ENCODE measurements at regions of chr1 and their contacts with region 1.

Region 1: DNA sequence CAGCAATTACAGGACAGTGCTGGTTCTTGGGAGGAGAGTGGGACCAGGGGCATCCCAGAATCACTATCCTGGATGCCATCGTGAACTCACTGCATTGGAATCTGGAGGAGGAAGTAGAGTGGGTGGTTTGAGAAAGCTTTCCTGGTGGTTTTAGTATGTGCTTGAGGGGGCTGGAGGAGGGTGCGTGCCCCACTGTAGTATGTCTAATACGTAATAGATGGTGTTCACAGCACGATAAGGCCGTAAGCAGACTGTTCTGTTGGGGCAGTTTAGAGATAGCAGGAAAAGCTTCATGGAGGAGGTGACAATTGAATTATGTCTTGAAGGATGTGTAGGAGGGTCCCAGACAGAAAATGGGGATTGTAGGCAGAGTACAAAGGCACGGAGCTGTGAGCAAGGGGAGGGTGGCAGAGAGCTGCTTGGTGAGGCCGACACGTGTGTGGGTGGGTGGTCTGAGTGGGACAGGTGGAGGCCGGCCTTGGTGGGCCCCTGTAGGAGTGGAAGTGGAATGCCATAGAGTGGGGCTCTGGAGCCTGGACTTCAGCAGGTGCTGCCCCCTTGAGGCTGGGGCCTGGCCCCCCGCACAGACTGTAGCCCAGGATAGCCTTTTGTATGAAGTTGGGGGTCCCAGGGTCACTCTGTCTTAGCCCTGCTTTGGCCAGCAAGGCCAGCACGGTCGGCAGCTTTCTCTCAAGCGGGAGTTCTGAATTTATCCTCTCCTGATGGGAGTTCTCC is 37.0 kb downstream of the IL6R start:
- DNase-seq: no peak
- ATAC-seq: no peak
- H3K4me3 ChIP-seq: no peak overlapping the region
- H3K27ac ChIP-seq: no peak overlapping the region
- H3K4me1 ChIP-seq: peaks cover 43% of the 10 kb centered on the region
- H3K27me3 ChIP-seq: no peaks in the 10 kb centered on the region
- CTCF ChIP-seq: peak; percentile 31 to 57 (median 45)
- EP300 ChIP-seq: no peak
- POLR2A ChIP-seq: no peak
- RAD21 ChIP-seq: peak; percentile 29; the same call in 1 of the 2 replicates

Region 2: DNA sequence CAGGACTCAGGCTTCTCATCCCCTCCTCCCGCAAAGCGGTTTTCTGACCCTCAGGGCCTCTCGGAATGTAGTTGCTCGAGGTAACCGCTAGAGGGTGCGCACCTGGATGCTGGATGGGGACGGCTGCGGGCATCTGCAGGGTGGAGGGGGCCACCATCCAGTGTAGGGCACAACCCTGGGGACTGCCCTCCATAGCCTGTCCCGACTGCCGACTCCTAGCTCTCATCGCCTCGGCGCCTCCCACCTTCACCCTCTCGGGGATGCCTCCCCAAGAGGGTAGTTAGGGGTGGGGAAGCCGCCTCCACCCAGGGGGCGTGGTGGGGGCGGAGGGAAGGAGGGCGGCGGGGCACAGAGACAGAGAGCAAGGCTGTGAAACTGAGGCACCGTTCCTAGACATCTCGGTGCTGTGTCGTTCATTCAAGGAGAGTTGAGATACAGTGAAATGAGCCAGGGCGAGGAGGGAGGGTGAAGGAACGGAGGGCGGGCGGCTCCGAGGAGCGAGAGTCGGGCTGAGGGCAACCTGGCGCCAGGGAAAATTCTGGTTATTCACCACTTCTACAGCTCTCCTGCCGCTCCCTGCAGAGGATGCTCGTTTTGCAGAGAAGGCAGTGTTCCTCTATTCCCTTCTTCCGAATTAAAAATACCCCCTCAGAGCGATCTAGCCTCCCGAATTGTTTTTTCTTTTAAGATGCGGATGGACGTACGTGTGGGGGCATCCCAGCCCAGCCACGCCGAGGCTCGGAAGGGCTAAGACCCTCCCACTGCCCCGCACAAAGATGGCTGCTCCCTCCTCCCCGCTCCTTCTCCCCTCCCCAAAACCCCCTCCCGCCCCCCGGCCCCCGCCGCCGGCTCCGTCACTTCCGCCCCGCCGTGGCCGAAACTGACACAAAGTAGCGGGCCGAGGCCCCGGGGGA is 117.2 kb before region 1 on chr1 and contains the start of gene ATP8B2:
- CTCF ChIA-PET with region 1: interaction called, 4 read pairs
- POLR2A ChIA-PET with region 1: no interaction called
- RAD21 ChIA-PET with region 1: interaction called, 4 read pairs
- SMC1A ChIA-PET with region 1: no interaction called
- in situ Hi-C with region 1: no loop called
- intact Hi-C with region 1: loop called (anchors 5 kb)
- DNase-seq: no peak
- ATAC-seq: peak; percentile 74
- H3K4me3 ChIP-seq: peak within 1 kb of the TSS; percentile 91
- H3K27ac ChIP-seq: peak within 1 kb of the TSS; percentile 42
- H3K4me1 ChIP-seq: peaks cover 23% of the 10 kb centered on the region
- H3K27me3 ChIP-seq: no peaks in the 10 kb centered on the region
- CTCF ChIP-seq: peak; percentile 92 to 94 (median 92)
- EP300 ChIP-seq: no peak
- POLR2A ChIP-seq: no peak; the same call in 1 of the 2 replicates
- RAD21 ChIP-seq: peak; percentile 54
- polyA plus RNA-seq, gene ATP8B2: 0.44 to 0.82 TPM

Region 3: DNA sequence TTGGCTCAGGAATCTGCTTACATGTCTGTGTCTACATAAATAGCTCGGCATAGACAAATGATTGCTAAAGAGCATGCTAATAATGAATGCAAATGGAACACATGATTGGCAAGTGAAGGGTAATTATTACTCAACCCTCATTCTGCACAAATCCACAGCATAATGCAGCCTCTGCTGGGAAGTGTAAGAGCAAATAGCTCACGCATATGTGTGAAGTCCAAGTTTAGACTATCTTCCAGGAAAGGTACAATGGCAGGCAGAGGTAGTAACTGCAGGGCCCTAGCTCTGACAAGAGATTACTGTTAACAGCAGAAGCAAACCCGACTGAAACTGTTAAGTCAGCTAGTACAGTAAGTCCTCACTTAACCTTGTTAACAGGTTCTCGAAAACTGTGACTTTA is 44.0 kb before region 1 on chr1:
- CTCF ChIA-PET with region 1: interaction called, 8 read pairs
- POLR2A ChIA-PET with region 1: no interaction called
- RAD21 ChIA-PET with region 1: interaction called, 5 read pairs
- SMC1A ChIA-PET with region 1: interaction called, 12 read pairs
- in situ Hi-C with region 1: no loop called
- intact Hi-C with region 1: no loop called
- DNase-seq: no peak
- ATAC-seq: no peak
- H3K4me3 ChIP-seq: no peak overlapping the region
- H3K27ac ChIP-seq: no peak overlapping the region
- H3K4me1 ChIP-seq: peaks cover 5% of the 10 kb centered on the region
- H3K27me3 ChIP-seq: no peaks in the 10 kb centered on the region
- CTCF ChIP-seq: no peak
- EP300 ChIP-seq: no peak
- POLR2A ChIP-seq: no peak
- RAD21 ChIP-seq: no peak

Region 4: DNA sequence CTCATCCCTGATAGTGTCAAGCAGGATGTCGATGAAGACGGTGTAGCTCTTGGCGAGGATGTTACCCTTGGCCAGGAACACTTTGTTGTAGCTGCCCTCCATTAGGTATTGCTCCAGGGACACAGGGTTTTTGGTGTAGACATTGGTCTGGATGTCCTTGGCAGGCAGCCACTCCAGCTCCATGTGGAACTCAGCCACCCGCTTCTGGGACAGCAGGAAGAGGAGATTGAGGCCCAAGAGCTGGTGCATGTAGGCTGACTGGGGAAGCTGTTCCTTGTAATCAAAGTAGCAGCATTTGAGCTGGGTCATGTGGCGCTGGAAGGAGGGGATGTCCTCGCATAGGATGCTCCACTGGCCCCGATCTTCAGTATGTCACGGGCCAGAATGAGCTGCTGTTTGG is 27.6 kb before region 1 on chr1:
- CTCF ChIA-PET with region 1: interaction called, 67 read pairs
- POLR2A ChIA-PET with region 1: interaction called, 9 read pairs
- RAD21 ChIA-PET with region 1: interaction called, 80 read pairs
- SMC1A ChIA-PET with region 1: interaction called, 89 read pairs
- in situ Hi-C with region 1: no loop called
- intact Hi-C with region 1: no loop called
- DNase-seq: no peak
- ATAC-seq: no peak
- H3K4me3 ChIP-seq: no peak overlapping the region
- H3K27ac ChIP-seq: no peak overlapping the region
- H3K4me1 ChIP-seq: peaks cover 38% of the 10 kb centered on the region
- H3K27me3 ChIP-seq: no peaks in the 10 kb centered on the region
- CTCF ChIP-seq: no peak
- EP300 ChIP-seq: no peak
- POLR2A ChIP-seq: no peak
- RAD21 ChIP-seq: no peak

Region 5: GRCh38 chr1:154419620-154420571 is 22.3 kb before region 1 on chr1:
- CTCF ChIA-PET with region 1: interaction called, 8 read pairs
- POLR2A ChIA-PET with region 1: interaction called, 9 read pairs
- RAD21 ChIA-PET with region 1: interaction called, 15 read pairs
- SMC1A ChIA-PET with region 1: interaction called, 29 read pairs
- in situ Hi-C with region 1: no loop called
- intact Hi-C with region 1: no loop called
- DNase-seq: no peak
- ATAC-seq: peak; percentile 85
- H3K4me3 ChIP-seq: no peak overlapping the region
- H3K27ac ChIP-seq: peak overlapping the region; percentile 2; the same call in 1 of the 2 replicates
- H3K4me1 ChIP-seq: peaks cover 26% of the 10 kb centered on the region
- H3K27me3 ChIP-seq: no peaks in the 10 kb centered on the region
- CTCF ChIP-seq: no peak
- EP300 ChIP-seq: no peak
- POLR2A ChIP-seq: no peak
- RAD21 ChIP-seq: no peak